B cell (primary cell): ENCODE measurements at regions of chr20 and their contacts with region 1.

Region 1: DNA sequence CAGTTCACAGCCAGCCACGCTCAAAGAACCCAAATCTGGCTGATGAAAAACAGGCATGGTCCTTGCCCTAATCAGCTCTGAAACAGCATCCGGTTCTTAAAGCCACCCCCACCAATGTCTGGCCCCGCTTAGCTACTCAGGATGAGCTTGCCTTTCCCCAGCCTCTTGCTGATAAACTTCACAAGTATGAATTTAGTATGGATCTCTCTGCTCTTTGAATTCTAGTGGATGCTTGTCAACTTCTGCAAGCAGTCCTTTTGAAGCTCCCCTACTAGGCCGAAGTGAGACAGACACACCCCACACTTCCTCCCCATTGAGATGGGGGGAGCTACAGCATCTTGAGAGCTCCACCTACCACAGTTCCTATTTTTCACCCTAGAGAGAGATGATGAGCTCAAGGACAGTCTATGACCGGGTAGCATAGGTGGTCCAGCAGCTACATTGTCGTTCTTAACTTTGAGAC is 36.7 kb downstream of the EBF4 start:
- DNase-seq: peak; percentile 38
- ATAC-seq: peak; percentile 43
- H3K4me3 ChIP-seq: no peak overlapping the region
- H3K4me3 Mint-ChIP-seq: no peak overlapping the region
- H3K27ac ChIP-seq: no peak overlapping the region
- H3K27ac Mint-ChIP-seq: no peak overlapping the region
- H3K4me1 ChIP-seq: peaks cover 6% of the 10 kb centered on the region in 2 donors
- H3K4me1 Mint-ChIP-seq: peaks cover 7% of the 10 kb centered on the region
- H3K27me3 ChIP-seq: peaks cover 0 to 26% (median 21%) of the 10 kb centered on the region in 4 experiments
- H3K27me3 Mint-ChIP-seq: peaks cover 32% of the 10 kb centered on the region
- CTCF ChIP-seq: no peak

Region 2: GRCh38 chr20:2742934-2743559 is 13.8 kb after region 1 on chr20:
- CTCF ChIA-PET with region 1: interaction called, 14 read pairs
- POLR2A ChIA-PET with region 1: no interaction called
- intact Hi-C with region 1: no loop called
- DNase-seq: peak; percentile 72
- ATAC-seq: peak; percentile 78
- H3K4me3 ChIP-seq: no peak overlapping the region
- H3K4me3 Mint-ChIP-seq: no peak overlapping the region
- H3K27ac ChIP-seq: no peak overlapping the region
- H3K27ac Mint-ChIP-seq: no peak overlapping the region
- H3K4me1 ChIP-seq: peaks cover 0 to 6% of the 10 kb centered on the region in 2 donors
- H3K4me1 Mint-ChIP-seq: peaks cover 6% of the 10 kb centered on the region
- H3K27me3 ChIP-seq: peaks cover 0 to 25% (median 10%) of the 10 kb centered on the region in 4 experiments
- H3K27me3 Mint-ChIP-seq: peaks cover 38% of the 10 kb centered on the region
- CTCF ChIP-seq: peak; percentile 85